ENCODE measurements at regions of chr10 and their contacts with region 1.

Region 1: DNA sequence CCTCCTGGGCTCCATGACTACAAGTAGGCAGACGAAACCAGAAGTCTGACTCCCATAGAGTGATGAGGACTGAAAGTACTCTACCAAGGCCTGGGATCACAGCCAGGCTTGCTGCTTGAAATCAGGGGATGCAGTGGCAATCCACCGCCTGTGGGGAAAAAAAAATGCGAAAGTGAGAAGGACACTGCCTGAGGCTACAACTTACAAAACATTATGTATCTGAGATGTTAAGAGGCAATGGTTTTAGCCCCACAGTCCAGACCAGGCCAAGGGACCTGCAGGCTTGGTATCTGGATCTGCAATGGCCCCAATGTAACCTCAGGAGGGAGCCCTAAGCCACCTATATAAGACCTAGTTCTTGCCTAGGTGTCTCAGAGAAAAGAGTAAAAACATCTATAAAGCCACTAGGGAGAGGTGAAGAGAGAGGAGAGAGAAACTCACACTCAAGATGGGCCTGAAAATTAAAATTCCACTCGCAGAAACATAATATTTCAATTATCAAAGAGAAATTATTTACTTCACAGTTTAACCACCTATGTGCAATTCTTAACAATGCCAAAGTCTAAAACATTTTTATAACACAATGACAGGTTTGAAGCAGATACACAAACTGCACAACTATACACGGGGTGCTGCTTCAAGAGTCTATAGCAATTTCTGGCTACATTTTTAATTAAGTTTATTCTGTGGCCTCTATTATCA is 13.9 kb downstream of the DNAJC1 start:
- DNase-seq: peak; percentile 26
- H3K4me3 ChIP-seq: no peak overlapping the region
- H3K27ac ChIP-seq: no peak overlapping the region
- H3K4me1 ChIP-seq: no peaks in the 10 kb centered on the region
- H3K27me3 ChIP-seq: no peaks in the 10 kb centered on the region
- CTCF ChIP-seq: peak; percentile 25

Region 2: GRCh38 chr10:21888959-21889358 is 100.6 kb before region 1 on chr10:
- intact Hi-C with region 1: no loop called
- DNase-seq: no peak
- H3K4me3 ChIP-seq: no peak overlapping the region
- H3K27ac ChIP-seq: no peak overlapping the region
- H3K4me1 ChIP-seq: no peaks in the 10 kb centered on the region
- H3K27me3 ChIP-seq: no peaks in the 10 kb centered on the region
- CTCF ChIP-seq: no peak

Region 3: DNA sequence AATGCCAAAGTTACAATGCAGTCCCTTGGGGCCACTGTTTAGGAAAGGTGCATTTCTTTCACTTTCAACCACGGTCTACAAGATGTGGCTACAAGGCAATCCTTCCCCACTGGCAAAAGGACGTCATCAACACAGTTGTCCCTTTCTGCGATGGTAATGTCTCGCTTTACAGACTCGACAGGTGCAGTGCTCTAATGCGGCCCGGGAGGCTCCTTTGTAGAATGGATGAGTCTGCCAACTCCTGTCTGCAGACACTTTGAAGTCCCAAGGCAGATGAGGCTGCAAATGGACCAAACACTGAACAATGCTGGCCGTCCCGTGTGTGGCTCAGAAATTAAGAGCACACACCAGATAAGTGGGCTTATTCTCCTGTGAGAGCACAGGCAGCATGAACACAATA is 591.1 kb after region 1 on chr10:
- intact Hi-C with region 1: loop called (anchors 10 kb)
- DNase-seq: no peak
- H3K4me3 ChIP-seq: no peak overlapping the region
- H3K27ac ChIP-seq: no peak overlapping the region
- H3K4me1 ChIP-seq: no peaks in the 10 kb centered on the region
- H3K27me3 ChIP-seq: no peaks in the 10 kb centered on the region
- CTCF ChIP-seq: no peak